ENCODE measurements at regions of chr6 and their contacts with region 1.

Region 1: DNA sequence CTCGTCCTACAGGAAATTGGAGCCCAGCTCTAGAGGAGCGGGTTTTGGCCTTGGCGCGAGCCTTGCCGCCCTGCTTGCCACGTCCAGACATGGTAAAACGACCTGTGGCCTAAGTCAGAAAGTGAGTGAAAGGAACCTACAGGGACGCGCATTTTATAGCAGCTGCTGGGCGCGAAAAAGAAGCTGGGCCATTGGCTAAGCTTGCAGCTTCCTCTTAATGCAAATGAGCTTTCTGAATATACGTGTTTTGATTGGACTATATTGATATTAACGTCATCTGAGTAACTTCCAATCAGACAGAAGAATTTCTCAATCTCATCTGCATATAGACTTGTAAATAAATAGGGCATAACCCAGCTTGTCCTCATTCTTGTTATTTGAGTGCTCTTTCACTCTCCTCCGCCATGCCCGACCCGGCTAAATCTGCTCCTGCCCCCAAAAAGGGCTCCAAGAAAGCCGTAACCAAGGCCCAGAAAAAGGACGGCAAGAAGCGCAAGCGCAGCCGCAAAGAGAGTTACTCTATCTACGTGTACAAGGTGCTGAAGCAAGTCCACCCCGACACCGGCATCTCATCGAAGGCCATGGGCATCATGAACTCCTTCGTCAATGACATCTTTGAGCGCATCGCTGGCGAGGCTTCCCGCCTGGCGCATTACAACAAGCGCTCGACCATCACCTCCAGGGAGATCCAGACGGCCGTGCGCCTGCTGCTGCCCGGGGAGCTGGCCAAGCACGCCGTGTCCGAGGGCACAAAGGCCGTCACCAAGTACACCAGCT is 18.9 kb downstream of the OR2B2 start:
- DNase-seq: peak in 38 of 42 donors; percentile 10 to 78 (median 53)

Region 2: DNA sequence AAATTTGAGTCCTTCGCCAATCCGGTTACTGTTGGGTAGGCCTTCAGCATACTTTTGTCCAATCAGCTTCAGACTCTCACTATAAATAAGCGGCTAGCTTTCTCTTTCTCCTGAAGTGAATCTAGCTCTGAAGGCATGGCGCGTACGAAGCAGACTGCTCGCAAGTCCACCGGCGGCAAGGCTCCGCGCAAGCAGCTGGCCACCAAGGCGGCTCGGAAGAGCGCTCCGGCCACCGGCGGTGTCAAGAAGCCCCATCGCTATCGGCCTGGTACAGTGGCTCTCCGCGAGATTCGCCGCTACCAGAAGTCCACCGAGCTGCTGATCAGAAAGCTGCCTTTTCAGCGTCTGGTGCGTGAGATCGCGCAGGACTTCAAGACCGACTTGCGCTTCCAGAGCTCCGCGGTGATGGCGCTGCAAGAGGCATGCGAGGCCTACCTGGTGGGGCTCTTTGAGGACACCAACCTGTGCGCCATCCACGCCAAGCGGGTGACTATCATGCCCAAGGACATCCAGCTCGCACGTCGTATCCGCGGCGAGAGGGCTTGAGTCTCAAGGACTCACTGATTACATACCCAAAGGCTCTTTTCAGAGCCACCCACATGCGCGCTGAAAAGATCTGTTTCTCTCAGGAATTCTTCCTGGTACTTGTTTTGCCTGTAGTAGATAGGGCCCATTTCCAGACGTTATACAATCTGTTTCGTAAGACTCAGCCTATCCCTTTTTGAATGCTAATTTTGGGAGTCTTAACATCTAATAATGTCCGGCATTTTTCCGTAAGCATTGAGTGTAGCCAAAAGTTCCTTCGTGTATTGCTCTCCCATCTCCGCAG is 83.1 kb before region 1 on chr6:
- intact Hi-C with region 1: loop called (anchors 10 kb)
- DNase-seq: peak in 29 of 42 donors; percentile 4 to 63 (median 41)

Region 3: GRCh38 chr6:27864906-27865849 is 28.1 kb before region 1 on chr6:
- intact Hi-C with region 1: no loop called
- DNase-seq: peak in 39 of 42 donors; percentile 11 to 79 (median 43)

Region 4: GRCh38 chr6:28107506-28107905 is 214.3 kb after region 1 on chr6:
- intact Hi-C with region 1: no loop called
- DNase-seq: peak in 24 of 42 donors; percentile 7 to 57 (median 32)